Heart right ventricle (tissue), 16 donors: ENCODE measurements at regions of chr2 and their contacts with region 1.

Region 1: GRCh38 chr2:164420786-164421185 is 200.5 kb downstream of the GRB14 start:
- DNase-seq: no peak
- ATAC-seq: no peak
- H3K4me3 ChIP-seq: no peak overlapping the region
- H3K27ac ChIP-seq: no peak overlapping the region
- H3K4me1 ChIP-seq: no peaks in the 10 kb centered on the region
- H3K27me3 ChIP-seq: no peaks in the 10 kb centered on the region
- CTCF ChIP-seq: no peak

Region 2: GRCh38 chr2:162710287-162710890 is 1710.4 kb before region 1 on chr2:
- intact Hi-C with region 1: loop called in 1 of 10 experiments (anchors 5 kb)
- DNase-seq: no peak
- ATAC-seq: no peak
- H3K4me3 ChIP-seq: no peak overlapping the region
- H3K27ac ChIP-seq: no peak overlapping the region
- H3K4me1 ChIP-seq: no peaks in the 10 kb centered on the region
- H3K27me3 ChIP-seq: no peaks in the 10 kb centered on the region
- CTCF ChIP-seq: no peak

Region 3: GRCh38 chr2:163191372-163191771 is 1229.4 kb before region 1 on chr2:
- intact Hi-C with region 1: loop called in 1 of 10 experiments (anchors 10 kb)
- DNase-seq: no peak
- ATAC-seq: no peak
- H3K4me3 ChIP-seq: no peak overlapping the region
- H3K27ac ChIP-seq: no peak overlapping the region
- H3K4me1 ChIP-seq: no peaks in the 10 kb centered on the region
- H3K27me3 ChIP-seq: no peaks in the 10 kb centered on the region
- CTCF ChIP-seq: peak; percentile 23 to 71 (median 59)

Region 4: GRCh38 chr2:163338270-163338669 is 1082.5 kb before region 1 on chr2:
- intact Hi-C with region 1: loop called in 3 of 10 experiments (anchors 10 kb)
- DNase-seq: no peak
- ATAC-seq: no peak
- H3K4me3 ChIP-seq: no peak overlapping the region
- H3K27ac ChIP-seq: no peak overlapping the region
- H3K4me1 ChIP-seq: no peaks in the 10 kb centered on the region
- H3K27me3 ChIP-seq: no peaks in the 10 kb centered on the region
- CTCF ChIP-seq: no peak